GM10248 (cell line): ENCODE measurements at regions of chr3 and their contacts with region 1.

Region 1: GRCh38 chr3:179071550-179072397 is at the start of gene ZMAT3:
- DNase-seq: peak; percentile 86
- CTCF ChIP-seq: no peak

Region 2: DNA sequence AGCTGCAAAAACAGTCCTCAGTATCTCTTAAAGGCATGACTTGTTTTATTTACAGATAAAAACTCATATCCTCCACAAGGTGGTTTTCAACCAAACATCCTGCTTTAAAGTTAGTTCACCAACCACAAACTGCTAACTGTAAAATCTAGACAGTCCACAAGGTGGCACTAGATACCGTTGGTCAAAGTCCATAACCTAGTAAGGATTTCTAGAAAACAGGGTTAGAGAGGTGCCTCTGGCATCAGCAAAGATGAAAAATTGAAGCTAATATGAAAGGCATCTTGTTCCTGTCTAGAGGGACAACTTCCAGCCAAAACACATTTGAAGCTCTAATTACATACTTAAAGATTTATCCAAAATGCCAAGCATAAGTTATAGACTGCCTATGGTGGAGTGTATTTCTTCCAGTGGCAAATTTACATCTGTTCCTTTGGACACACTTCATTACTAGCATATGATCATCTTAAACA is 56.2 kb before region 1 on chr3:
- CTCF ChIA-PET with region 1: interaction called, 12 read pairs
- POLR2A ChIA-PET with region 1: no interaction called
- DNase-seq: peak; percentile 42
- CTCF ChIP-seq: peak; percentile 80

Region 3: DNA sequence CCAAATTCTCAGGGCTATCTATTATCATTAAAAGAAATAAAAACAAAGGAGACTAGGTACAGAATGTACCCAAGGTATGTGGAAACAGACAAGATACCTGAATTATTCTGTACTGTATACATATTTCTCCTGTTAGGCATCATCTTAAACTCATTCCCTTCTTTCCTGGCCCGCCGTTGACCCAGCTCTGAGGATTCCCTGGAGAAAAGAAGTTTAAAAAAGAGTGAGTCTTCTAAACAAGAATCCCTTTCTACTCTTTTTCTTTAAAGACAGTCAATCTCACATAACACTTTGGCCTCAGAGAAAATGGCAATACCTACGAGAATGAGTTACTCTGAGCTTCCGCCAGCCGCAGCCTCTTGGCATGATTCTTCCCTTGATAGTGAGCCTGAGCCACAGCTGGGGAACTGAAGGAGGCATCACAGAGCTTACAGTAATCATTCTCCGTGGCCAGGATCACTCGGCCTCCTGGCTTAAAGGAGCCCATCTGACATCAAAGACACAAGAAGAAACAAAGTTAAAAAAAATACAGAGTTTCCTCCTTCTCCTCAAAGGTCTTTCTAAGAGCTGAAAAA is 44.4 kb before region 1 on chr3:
- CTCF ChIA-PET with region 1: no interaction called
- POLR2A ChIA-PET with region 1: no interaction called
- DNase-seq: no peak
- CTCF ChIP-seq: no peak

Region 4: GRCh38 chr3:179046497-179047353 is 25.0 kb before region 1 on chr3:
- CTCF ChIA-PET with region 1: interaction called, 58 read pairs
- POLR2A ChIA-PET with region 1: interaction called, 3 read pairs
- DNase-seq: peak; percentile 47
- CTCF ChIP-seq: no peak

Region 5: DNA sequence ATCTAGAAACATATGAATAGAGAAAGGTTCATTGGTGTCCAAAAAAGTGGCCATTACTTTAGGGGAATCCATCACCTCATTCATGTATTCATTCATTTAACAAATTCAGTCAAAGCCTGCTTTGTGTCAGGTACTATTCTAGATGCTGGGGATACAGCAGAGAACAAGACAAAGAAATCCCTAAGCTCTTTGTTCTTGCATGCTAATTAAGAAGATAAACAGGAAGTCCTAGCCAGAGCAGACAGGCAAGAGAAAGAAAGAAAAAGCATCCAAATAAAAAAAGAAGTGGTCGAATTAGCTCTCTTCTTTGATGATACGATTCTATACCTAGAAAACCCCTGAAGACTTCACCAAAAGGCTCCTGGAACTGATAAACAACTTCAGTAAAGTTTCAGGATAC is 12.2 kb after region 1 on chr3:
- CTCF ChIA-PET with region 1: interaction called, 33 read pairs
- POLR2A ChIA-PET with region 1: no interaction called
- DNase-seq: no peak
- CTCF ChIP-seq: no peak

Region 6: DNA sequence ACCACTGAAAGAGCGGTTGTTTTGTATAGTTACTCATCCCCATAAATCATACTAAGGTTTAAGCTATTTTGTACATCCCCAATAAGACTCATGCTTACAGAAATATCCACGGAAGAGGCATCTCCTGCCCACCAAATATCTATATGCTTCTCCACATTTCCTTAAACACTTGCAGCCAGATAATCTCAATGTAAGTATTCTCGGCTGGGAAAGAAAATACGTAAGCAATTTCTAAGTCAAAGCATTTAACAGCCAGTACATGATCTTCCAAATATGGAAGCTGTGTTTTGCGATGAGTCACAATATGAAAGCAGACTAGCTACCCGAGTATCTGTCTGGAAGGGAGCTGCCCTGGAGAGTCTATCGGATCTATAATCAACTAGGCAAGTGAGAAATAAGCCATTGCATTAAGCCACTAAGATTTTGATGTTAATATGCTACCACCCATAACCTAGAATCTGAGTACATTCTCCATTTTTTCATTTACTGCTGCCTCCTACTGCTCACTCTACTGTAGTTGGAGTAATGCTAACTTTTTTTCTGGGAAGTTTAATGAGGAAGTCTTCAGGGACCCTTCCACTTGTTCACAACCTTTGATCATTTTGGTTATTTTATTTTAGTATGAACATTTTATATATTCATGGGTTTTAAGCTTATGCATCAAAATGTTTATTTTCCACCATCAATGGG is 26.8 kb after region 1 on chr3:
- CTCF ChIA-PET with region 1: interaction called, 11 read pairs
- POLR2A ChIA-PET with region 1: no interaction called
- DNase-seq: no peak
- CTCF ChIP-seq: no peak

Region 7: DNA sequence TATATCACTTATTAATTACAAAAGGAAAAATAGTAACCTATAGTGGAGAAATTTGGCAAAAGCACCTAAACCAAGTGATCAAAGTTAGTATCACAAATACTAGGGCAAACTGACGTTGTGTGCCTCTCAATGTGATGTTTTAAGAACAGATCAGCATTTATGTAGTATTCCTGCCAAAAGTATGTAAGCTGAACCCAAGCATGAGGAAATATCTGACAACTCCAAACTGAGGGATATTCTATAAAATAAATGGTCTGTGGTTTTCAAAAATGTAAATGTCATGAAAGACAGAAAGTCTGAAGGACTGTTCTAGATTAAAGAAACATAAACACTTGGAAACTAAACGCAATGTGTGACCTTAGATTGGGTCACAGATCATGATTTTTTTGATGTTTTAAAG is 42.1 kb after region 1 on chr3:
- CTCF ChIA-PET with region 1: no interaction called
- POLR2A ChIA-PET with region 1: no interaction called
- DNase-seq: no peak
- CTCF ChIP-seq: no peak

Region 8: DNA sequence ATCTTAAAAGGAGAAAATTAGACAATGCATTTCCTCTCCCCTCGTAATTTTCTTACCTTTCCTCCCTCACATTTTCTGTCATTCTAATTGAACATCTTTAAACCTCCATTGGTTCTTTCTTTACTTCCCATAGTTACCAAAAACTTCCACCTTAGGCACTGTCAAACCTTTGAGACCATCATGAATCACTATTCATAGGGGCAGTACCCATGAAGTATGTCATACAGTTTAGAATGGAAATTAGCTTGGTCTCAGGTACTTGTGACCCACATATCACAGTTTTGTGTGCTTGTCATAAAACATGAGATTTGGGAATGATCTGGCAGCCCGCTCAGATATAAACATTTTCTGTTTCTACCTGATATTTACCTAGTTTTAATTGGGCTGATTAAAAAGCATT is 129.0 kb after region 1 on chr3:
- CTCF ChIA-PET with region 1: no interaction called
- POLR2A ChIA-PET with region 1: no interaction called
- DNase-seq: no peak
- CTCF ChIP-seq: no peak

Region 9: GRCh38 chr3:179322286-179323196 is 250.8 kb after region 1 on chr3 and contains the start of gene ZNF639:
- CTCF ChIA-PET with region 1: interaction called, 26 read pairs
- POLR2A ChIA-PET with region 1: interaction called, 3 read pairs
- DNase-seq: peak; percentile 93
- CTCF ChIP-seq: peak; percentile 72